CD4-positive, alpha-beta T cell (primary cell): ENCODE measurements at regions of chr11 and their contacts with region 1.

Region 1: GRCh38 chr11:119481021-119481666 is 58.2 kb upstream of the THY1 start:
- DNase-seq: peak; percentile 37 to 76 (median 57)
- ATAC-seq: peak; percentile 65
- H3K4me3 ChIP-seq: no peak overlapping the region
- H3K4me3 Mint-ChIP-seq: no peak overlapping the region
- H3K27ac ChIP-seq: no peak overlapping the region
- H3K27ac Mint-ChIP-seq: no peak overlapping the region
- H3K4me1 ChIP-seq: peaks cover 3% of the 10 kb centered on the region
- H3K4me1 Mint-ChIP-seq: no peaks in the 10 kb centered on the region
- H3K27me3 ChIP-seq: peaks cover 3 to 4% of the 10 kb centered on the region in 2 experiments
- H3K27me3 Mint-ChIP-seq: peaks cover 43% of the 10 kb centered on the region
- CTCF ChIP-seq: peak; percentile 71

Region 2: GRCh38 chr11:120108154-120108865 is 627.2 kb after region 1 on chr11:
- CTCF ChIA-PET with region 1: no interaction called
- POLR2A ChIA-PET with region 1: no interaction called
- intact Hi-C with region 1: loop called (anchors 1 to 5 kb)
- DNase-seq: peak; percentile 13 to 65 (median 46)
- ATAC-seq: peak; percentile 57
- H3K4me3 ChIP-seq: no peak overlapping the region
- H3K4me3 Mint-ChIP-seq: no peak overlapping the region
- H3K27ac ChIP-seq: no peak overlapping the region
- H3K27ac Mint-ChIP-seq: no peak overlapping the region
- H3K4me1 ChIP-seq: no peaks in the 10 kb centered on the region
- H3K4me1 Mint-ChIP-seq: no peaks in the 10 kb centered on the region
- H3K27me3 ChIP-seq: peaks cover 5 to 6% of the 10 kb centered on the region in 2 experiments
- H3K27me3 Mint-ChIP-seq: peaks cover 16% of the 10 kb centered on the region
- CTCF ChIP-seq: peak; percentile 88